ENCODE measurements at regions of chr15 and their contacts with region 1.

Region 1: GRCh38 chr15:75723847-75724660 is 11.4 kb upstream of the CSPG4 start:
- DNase-seq: peak; percentile 86 to 97
- ATAC-seq: peak; percentile 65 to 83
- H3K4me3 ChIP-seq: no peak overlapping the region
- H3K27ac ChIP-seq: peak overlapping the region; percentile 54 to 77
- H3K4me1 ChIP-seq: peaks cover 22% of the 10 kb centered on the region
- CTCF ChIP-seq: no peak
- EP300 ChIP-seq: no peak
- POLR2A ChIP-seq: no peak
- RAD21 ChIP-seq: no peak

Region 2: GRCh38 chr15:75554717-75555116 is 169.3 kb before region 1 on chr15:
- CTCF ChIA-PET with region 1: no interaction called
- POLR2A ChIA-PET with region 1: no interaction called
- DNase-seq: no peak
- ATAC-seq: peak in 1 of 2 experiments; percentile 39; a peak in 3 of 6 replicates
- H3K4me3 ChIP-seq: no peak overlapping the region
- H3K27ac ChIP-seq: no peak overlapping the region
- H3K4me1 ChIP-seq: no peaks in the 10 kb centered on the region
- CTCF ChIP-seq: no peak
- EP300 ChIP-seq: no peak
- POLR2A ChIP-seq: no peak
- RAD21 ChIP-seq: no peak

Region 3: DNA sequence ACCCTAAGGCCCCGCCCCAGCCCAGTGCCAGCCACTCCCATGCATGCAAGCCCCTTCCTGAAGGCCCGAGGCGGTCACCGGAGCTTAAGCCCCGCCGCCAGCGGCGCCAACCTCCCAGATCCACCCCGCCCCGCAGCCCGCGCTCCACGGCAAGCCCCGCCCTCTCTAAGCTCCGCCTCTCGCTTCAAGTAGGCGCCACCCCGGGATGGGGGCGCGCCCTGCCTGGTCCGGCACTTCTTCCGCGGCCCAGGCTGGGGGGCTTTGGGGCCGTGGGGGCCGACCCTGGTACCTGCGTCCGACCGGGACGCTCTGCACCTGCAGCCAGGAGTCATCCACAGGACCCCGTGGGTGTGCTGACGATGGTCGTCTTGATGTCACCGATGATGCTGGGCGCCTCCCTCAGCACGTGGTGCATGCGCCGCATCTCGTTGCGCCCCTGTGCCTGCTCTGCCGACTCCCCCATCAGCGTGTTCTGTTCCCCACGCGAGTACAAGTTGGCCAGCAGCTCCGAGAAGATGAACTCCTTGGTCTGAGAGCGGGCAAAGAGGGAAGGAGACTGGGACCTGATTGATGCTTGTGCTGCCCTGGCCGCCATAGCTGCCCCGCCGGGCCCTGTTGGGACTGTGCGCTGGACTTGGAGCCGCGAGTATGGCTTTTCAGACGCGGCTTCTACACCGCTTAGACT is 14.7 kb after region 1 on chr15:
- CTCF ChIA-PET with region 1: interaction called, 33 read pairs
- POLR2A ChIA-PET with region 1: interaction called, 9 read pairs
- DNase-seq: peak; percentile 96 to 97
- ATAC-seq: peak; percentile 92 to 98
- H3K4me3 ChIP-seq: peak overlapping the region; percentile 87
- H3K27ac ChIP-seq: peak overlapping the region; percentile 81 to 94
- H3K4me1 ChIP-seq: 0 out of 3 replicates have a peak, but pooled peaks cover 3% of the 10 kb centered on the region
- CTCF ChIP-seq: no peak
- EP300 ChIP-seq: no peak
- POLR2A ChIP-seq: peak; percentile 45
- RAD21 ChIP-seq: no peak